Transverse colon (tissue), 4 donors: ENCODE measurements at regions of chr5 and their contacts with region 1.

Region 1: GRCh38 chr5:58460732-58461286 is 923 bp upstream of the PLK2 start:
- DNase-seq: peak; percentile 95
- H3K4me3 ChIP-seq: peak overlapping the region; percentile 56 to 90 (median 82)
- H3K27ac ChIP-seq: peak overlapping the region; percentile 93 to 97 (median 96)
- H3K4me1 ChIP-seq: peaks cover 0 to 25% (median 9%) of the 10 kb centered on the region in 4 donors
- H3K27me3 ChIP-seq: no peaks in the 10 kb centered on the region
- CTCF ChIP-seq: peak; percentile 56 to 81 (median 68)
- EP300 ChIP-seq: no peak
- POLR2A ChIP-seq: no peak

Region 2: DNA sequence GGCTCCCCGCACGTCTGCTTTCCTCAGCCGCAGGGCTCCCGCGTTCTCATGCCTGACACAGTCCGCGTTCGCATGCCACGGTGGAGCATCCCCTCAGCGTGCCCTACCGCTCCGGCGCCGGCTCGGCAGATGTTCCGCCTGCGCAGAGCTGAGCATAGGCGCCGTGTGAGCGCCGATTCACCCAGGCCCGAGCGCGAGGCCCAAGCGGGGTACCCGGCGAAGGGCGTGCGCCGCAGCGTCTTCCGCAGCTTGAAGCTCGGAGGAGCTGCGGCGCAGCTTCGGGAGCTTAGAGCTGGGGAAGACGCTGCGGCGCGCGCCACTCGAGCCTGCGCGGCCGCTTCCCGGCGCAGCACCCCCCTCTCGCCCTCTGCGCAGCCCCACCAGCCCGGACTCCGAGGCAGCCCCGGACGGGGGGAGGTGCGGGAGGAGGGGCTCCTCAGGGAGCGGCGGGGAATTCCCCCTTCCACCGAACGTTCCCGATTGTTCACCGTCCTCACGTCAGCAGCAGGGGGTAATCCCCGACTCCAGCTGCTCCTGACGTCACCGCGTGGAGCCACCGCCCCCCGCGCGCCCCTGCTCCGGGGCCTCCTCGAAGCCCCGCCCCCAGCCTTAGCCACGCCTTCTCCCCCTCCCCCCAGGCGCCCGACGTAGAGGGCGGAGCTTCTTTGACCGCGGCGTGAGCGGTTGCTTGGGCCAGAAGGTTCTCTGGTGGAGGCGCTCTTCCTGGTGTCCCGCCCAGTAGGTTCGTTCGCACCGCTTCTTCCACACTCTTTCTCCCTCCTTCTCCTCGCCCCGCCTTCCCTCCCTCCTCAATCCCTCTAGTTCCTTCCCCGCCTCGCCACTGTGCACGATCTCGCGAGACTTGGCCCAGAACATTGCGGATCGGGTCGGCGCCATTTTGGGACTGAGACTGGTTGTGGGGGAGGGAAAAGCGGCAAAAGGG is 1287.4 kb before region 1 on chr5 and contains the start of gene GPBP1:
- in situ Hi-C with region 1: no loop called
- intact Hi-C with region 1: loop called (anchors 5 kb)
- DNase-seq: peak; percentile 99
- H3K4me3 ChIP-seq: peak within 1 kb of the TSS; percentile 55 to 95 (median 84)
- H3K27ac ChIP-seq: peak within 1 kb of the TSS; percentile 95 to 100 (median 99)
- H3K4me1 ChIP-seq: peaks cover 0 to 32% (median 22%) of the 10 kb centered on the region in 4 donors
- H3K27me3 ChIP-seq: no peaks in the 10 kb centered on the region
- CTCF ChIP-seq: peak in 1 of 5 experiments; percentile 12
- EP300 ChIP-seq: peak; percentile 86
- POLR2A ChIP-seq: peak; percentile 83
- total RNA-seq, gene GPBP1: 36.7 to 95.1 (median 75.6) TPM

Region 3: GRCh38 chr5:57499262-57500050 is 961.4 kb before region 1 on chr5:
- in situ Hi-C with region 1: loop called in 2 of 4 experiments (anchors 25 kb)
- intact Hi-C with region 1: no loop called
- DNase-seq: no peak
- H3K4me3 ChIP-seq: peak overlapping the region in 1 of 4 donors; percentile 13
- H3K27ac ChIP-seq: peak overlapping the region in 1 of 4 donors; percentile 28
- H3K4me1 ChIP-seq: peaks cover 0 to 7% (median under 1%) of the 10 kb centered on the region in 4 donors
- H3K27me3 ChIP-seq: no peaks in the 10 kb centered on the region
- CTCF ChIP-seq: peak; percentile 31 to 49 (median 43)
- EP300 ChIP-seq: no peak
- POLR2A ChIP-seq: no peak

Region 4: DNA sequence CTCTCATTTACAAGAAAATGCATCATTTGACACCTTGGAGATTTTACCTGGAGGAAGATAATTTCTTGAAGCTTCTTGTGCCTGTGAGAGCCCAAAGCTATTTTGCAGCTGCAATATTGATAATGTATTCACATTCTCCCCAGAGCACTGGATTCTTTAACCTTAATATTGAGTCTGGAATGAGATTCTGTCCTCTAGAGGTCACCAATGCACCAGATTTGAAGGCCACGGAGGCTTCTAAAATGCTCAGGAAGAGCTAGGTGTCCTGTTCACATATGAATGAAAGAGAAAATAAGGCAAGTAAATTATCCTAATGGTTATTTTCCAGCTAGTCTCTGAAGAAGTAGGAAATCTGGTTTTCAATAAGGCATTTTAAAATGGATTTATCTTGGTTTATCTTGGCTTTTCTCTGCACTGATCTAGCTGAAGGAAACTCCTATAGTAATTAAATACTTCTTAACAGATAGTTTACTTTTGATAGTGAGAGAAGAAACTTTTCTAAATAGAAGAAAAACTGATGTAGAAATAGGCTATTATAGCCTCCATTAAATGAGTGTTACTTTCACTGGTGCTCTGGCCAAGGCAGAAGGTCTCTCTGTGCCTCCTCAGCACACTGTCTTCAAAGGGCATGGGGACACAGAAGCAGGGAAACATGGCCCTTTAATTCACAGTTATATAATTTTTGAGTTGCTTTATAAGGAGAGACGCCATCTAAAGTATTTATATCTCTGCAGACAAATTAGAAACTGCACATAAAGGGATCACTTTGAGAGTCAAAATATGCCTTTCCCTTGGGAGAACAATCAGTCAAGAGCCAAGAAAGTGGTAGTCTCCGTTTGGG is 681.2 kb before region 1 on chr5:
- in situ Hi-C with region 1: loop called in 3 of 4 experiments (anchors 10 kb)
- intact Hi-C with region 1: loop called (anchors 5 kb)
- DNase-seq: no peak
- H3K4me3 ChIP-seq: no peak overlapping the region
- H3K27ac ChIP-seq: no peak overlapping the region
- H3K4me1 ChIP-seq: peaks cover 0 to 25% (median 2%) of the 10 kb centered on the region in 4 donors
- H3K27me3 ChIP-seq: no peaks in the 10 kb centered on the region
- CTCF ChIP-seq: peak; percentile 44 to 59 (median 47)
- EP300 ChIP-seq: no peak
- POLR2A ChIP-seq: no peak

Region 5: GRCh38 chr5:57887851-57888621 is 572.8 kb before region 1 on chr5:
- in situ Hi-C with region 1: loop called in 2 of 4 experiments (anchors 25 kb)
- intact Hi-C with region 1: no loop called
- DNase-seq: peak; percentile 42
- H3K4me3 ChIP-seq: no peak overlapping the region
- H3K27ac ChIP-seq: no peak overlapping the region
- H3K4me1 ChIP-seq: no peaks in the 10 kb centered on the region
- H3K27me3 ChIP-seq: no peaks in the 10 kb centered on the region
- CTCF ChIP-seq: peak; percentile 33 to 61 (median 46)
- EP300 ChIP-seq: no peak
- POLR2A ChIP-seq: no peak

Region 6: GRCh38 chr5:58706736-58707135 is 245.9 kb after region 1 on chr5:
- in situ Hi-C with region 1: no loop called
- intact Hi-C with region 1: no loop called
- DNase-seq: no peak
- H3K4me3 ChIP-seq: no peak overlapping the region
- H3K27ac ChIP-seq: no peak overlapping the region
- H3K4me1 ChIP-seq: no peaks in the 10 kb centered on the region
- H3K27me3 ChIP-seq: no peaks in the 10 kb centered on the region
- CTCF ChIP-seq: no peak
- EP300 ChIP-seq: no peak
- POLR2A ChIP-seq: no peak